ENCODE measurements at regions of chr6 and their contacts with region 1.

Region 1: DNA sequence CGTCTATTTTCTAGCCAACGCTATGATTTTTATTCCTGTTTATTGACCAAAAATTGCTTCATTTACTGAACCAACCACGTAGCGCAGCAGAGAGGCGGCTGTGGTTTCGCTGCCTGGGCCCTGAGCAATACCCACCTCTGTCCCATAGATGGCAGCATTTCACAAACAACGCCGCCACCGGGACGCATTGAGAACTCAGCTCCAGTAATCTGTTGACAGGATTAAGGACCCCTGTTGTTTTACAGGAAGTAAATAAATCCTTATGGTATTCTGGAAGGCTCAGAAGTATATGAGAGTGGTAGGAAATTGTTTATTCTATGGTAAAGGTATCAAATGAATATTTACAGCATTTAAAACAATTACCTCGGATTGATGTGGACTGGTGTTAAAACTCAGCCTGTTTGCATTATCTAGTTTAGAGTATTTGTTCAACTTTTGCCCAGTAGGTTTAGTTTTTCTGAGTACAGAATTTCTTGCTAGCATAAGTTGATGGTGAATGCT is 547.9 kb upstream of the SLC35B3 start:
- DNase-seq: peak; percentile 77
- ATAC-seq: peak; percentile 75
- H3K4me3 Mint-ChIP-seq: no peak overlapping the region
- H3K27ac Mint-ChIP-seq: no peak overlapping the region
- H3K4me1 Mint-ChIP-seq: no peaks in the 10 kb centered on the region
- H3K27me3 Mint-ChIP-seq: peaks cover 23% of the 10 kb centered on the region

Region 2: DNA sequence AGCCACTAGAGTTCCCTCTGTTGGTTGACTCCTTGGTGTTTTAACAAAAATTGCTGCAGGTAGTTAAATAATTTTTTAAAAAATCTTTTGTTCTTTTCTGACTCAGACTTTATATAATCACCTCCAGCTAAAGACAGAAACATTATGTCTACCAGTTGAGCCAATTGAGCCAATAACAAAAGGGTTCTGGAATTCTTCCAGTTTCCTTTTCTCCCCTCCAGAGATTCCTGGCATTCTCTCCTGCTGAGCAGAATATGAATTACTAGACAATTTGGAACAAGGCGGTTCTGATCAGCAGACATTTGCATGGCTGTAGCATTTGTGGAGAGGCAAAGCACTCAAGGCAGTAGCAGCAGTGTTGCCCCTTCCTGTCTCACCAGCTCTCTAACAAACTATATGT is 403.9 kb before region 1 on chr6:
- CTCF ChIA-PET with region 1: no interaction called
- POLR2A ChIA-PET with region 1: no interaction called
- intact Hi-C with region 1: no loop called
- DNase-seq: no peak
- ATAC-seq: no peak
- H3K4me3 Mint-ChIP-seq: no peak overlapping the region
- H3K27ac Mint-ChIP-seq: no peak overlapping the region
- H3K4me1 Mint-ChIP-seq: no peaks in the 10 kb centered on the region
- H3K27me3 Mint-ChIP-seq: no peaks in the 10 kb centered on the region

Region 3: DNA sequence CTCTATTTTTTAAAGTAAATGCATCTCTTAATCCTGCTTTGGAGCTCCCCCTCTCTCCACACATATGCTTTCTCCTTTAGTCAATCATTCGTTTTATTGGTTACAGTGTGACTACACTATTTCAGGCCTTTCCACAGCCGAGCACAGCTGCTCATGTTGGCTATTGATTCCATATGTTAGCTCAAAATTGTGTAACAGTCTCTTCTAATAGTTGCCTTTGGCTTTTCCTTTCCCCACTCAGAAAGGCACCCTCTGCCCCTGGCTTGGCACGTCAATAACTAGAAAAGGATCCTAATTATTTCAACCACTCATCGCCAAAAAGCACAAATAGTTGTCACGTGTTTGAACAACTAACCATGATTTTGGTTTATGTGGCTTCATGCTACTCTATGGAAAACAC is 137.5 kb before region 1 on chr6:
- CTCF ChIA-PET with region 1: no interaction called
- POLR2A ChIA-PET with region 1: no interaction called
- intact Hi-C with region 1: no loop called
- DNase-seq: no peak
- ATAC-seq: no peak
- H3K4me3 Mint-ChIP-seq: no peak overlapping the region
- H3K27ac Mint-ChIP-seq: no peak overlapping the region
- H3K4me1 Mint-ChIP-seq: no peaks in the 10 kb centered on the region
- H3K27me3 Mint-ChIP-seq: no peaks in the 10 kb centered on the region

Region 4: GRCh38 chr6:9412951-9413559 is 429.8 kb after region 1 on chr6:
- CTCF ChIA-PET with region 1: interaction called, 4 read pairs
- POLR2A ChIA-PET with region 1: no interaction called
- intact Hi-C with region 1: loop called (anchors 1 kb)
- DNase-seq: peak; percentile 59
- ATAC-seq: peak; percentile 66
- H3K4me3 Mint-ChIP-seq: no peak overlapping the region
- H3K27ac Mint-ChIP-seq: no peak overlapping the region
- H3K4me1 Mint-ChIP-seq: no peaks in the 10 kb centered on the region
- H3K27me3 Mint-ChIP-seq: peaks cover 3% of the 10 kb centered on the region

Region 5: GRCh38 chr6:9540534-9541126 is 557.4 kb after region 1 on chr6:
- CTCF ChIA-PET with region 1: no interaction called
- POLR2A ChIA-PET with region 1: no interaction called
- intact Hi-C with region 1: loop called in 1 of 2 experiments (anchors 5 kb)
- DNase-seq: peak; percentile 8
- ATAC-seq: peak; percentile 51
- H3K4me3 Mint-ChIP-seq: no peak overlapping the region
- H3K27ac Mint-ChIP-seq: no peak overlapping the region
- H3K4me1 Mint-ChIP-seq: no peaks in the 10 kb centered on the region
- H3K27me3 Mint-ChIP-seq: peaks cover 2% of the 10 kb centered on the region

Region 6: DNA sequence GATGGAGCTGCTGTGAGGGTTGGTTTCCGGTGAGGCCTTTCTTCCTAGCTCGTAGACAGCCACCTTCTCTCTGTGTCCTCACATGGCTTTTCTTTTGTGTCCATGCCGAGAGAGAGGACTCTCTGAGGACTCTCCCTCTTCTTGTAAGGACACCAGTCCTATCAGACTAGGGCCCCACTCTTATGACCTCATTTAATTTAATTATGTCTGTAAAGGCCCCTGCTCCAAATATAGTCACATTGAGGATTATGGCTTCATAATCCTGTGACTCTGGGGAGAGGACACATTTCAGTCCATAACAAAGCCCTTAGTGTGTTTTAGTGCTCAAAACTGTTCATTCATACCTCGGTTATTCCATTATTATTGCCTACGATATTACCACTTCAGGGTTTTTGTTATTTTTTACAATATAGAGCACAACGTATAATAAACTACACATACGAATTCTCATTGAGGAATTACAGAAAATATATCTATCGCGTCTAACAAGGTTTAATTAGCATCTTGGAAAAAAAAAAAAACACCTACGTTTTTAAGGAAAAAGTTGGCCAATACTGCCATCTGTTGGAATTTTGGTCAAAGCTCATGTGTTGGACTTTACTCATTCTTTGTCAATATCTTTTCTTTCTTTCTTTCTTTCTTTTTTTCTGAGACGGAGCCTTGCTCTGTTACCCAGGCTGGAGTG is 1451.6 kb after region 1 on chr6:
- CTCF ChIA-PET with region 1: interaction called, 6 read pairs
- POLR2A ChIA-PET with region 1: no interaction called
- intact Hi-C with region 1: loop called (anchors 2 to 5 kb)
- DNase-seq: no peak
- ATAC-seq: no peak
- H3K4me3 Mint-ChIP-seq: no peak overlapping the region
- H3K27ac Mint-ChIP-seq: no peak overlapping the region
- H3K4me1 Mint-ChIP-seq: peaks cover 7% of the 10 kb centered on the region
- H3K27me3 Mint-ChIP-seq: peaks cover 24% of the 10 kb centered on the region

Measured in activated CD4-positive, alpha-beta T cell treated with anti-CD3 and anti-CD28 coated beads for 36 hours (primary cell).